ENCODE measurements at regions of chr2 and their contacts with region 1.

Region 1: DNA sequence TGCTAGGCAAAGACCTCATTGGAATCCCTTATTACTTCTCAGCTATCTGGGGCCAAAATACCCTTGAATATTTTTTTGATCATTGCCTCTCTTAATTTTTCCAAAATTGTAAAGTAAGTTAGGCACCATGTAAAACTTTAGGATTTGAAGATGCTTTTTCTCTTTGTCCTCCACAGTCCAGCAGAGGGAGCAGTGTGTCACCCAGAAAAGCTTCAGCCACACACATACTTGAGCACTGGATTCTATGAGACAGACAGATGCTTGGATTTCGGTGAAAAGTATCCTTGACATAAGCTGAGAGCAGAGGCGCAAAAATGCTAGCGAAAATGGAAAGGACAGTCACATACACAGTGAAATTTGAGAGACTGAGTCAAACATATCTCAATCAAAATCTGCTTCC is 74.7 kb upstream of the KCNJ3 start:
- DNase-seq: no peak

Region 2: GRCh38 chr2:153567367-153567766 is 1056.5 kb before region 1 on chr2:
- intact Hi-C with region 1: no loop called
- DNase-seq: no peak

Region 3: GRCh38 chr2:154697418-154698252 is 73.8 kb after region 1 on chr2:
- intact Hi-C with region 1: loop called in 1 of 2 experiments (anchors 5 kb)
- DNase-seq: peak; percentile 85

Measured in posterior vena cava (tissue), 2 donors.